Transverse colon (tissue), 4 donors: ENCODE measurements at regions of chr3 and their contacts with region 1.

Region 1: DNA sequence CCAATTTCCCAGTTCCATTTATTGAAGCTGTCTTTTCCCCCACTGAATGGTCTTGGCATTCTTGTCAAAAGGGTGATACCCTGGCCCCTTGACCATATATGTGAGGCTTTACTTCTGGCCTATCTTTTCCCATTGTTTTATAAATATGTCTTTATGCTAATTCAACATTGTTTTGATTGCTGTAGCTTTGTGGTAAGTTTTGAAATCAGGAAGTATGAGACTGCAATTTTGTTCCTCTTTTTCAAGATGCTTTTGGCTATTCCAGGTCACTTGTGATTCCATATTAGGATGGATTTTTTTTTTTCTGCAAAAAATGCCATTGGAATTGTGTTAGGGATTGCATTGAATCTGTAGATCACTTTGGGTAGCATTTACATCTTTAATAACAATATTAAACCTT is 141.2 kb upstream of the MANF start:
- DNase-seq: no peak
- H3K4me3 ChIP-seq: no peak overlapping the region
- H3K27ac ChIP-seq: no peak overlapping the region
- H3K4me1 ChIP-seq: no peaks in the 10 kb centered on the region
- H3K27me3 ChIP-seq: no peaks in the 10 kb centered on the region
- CTCF ChIP-seq: no peak
- EP300 ChIP-seq: no peak
- POLR2A ChIP-seq: no peak

Region 2: DNA sequence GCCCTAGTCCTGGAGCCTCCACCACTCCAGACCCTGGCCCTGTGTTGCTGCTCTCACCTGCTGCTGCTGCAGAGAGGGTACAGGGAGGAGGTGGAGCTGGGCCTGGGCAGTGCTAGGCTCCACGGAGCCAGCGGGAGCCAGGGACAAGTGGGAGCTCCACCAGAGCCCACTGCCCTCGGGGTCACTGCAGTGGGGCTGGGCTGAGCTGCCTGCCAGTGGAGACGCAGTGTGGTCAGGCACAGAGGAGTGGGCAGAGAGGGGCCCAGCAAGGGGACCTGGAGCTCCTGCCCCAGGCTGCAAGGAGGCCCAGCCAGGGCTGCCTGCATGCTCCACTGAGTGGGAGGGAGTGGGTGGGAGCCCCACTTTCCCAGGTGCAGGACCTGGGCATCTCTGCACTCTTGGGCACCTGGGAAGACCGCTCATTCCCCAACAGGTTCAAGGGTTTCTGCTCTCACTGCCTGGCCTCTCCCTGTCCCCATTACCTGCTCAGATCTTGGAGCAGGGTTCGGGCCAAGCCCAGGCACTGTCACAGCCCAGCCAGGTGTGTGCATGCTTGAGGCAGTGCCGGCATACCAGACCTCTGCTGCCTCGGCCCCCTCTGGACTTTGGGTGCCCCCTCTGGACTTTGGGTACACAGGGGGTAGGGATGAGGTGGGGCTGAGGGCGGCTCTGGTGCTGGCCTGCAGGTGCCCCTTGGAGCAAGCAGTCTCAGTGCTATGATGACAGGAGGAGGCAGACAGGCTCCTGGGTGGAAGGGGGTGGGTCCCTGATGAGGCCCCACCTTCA is 261.2 kb before region 1 on chr3:
- in situ Hi-C with region 1: no loop called
- intact Hi-C with region 1: no loop called
- DNase-seq: no peak
- H3K4me3 ChIP-seq: no peak overlapping the region
- H3K27ac ChIP-seq: no peak overlapping the region
- H3K4me1 ChIP-seq: no peaks in the 10 kb centered on the region
- H3K27me3 ChIP-seq: no peaks in the 10 kb centered on the region
- CTCF ChIP-seq: no peak
- EP300 ChIP-seq: no peak
- POLR2A ChIP-seq: no peak

Region 3: GRCh38 chr3:51198477-51198876 is 45.4 kb before region 1 on chr3:
- in situ Hi-C with region 1: no loop called
- intact Hi-C with region 1: loop called (anchors 1 kb)
- DNase-seq: no peak
- H3K4me3 ChIP-seq: no peak overlapping the region
- H3K27ac ChIP-seq: no peak overlapping the region
- H3K4me1 ChIP-seq: no peaks in the 10 kb centered on the region
- H3K27me3 ChIP-seq: no peaks in the 10 kb centered on the region
- CTCF ChIP-seq: no peak
- EP300 ChIP-seq: no peak
- POLR2A ChIP-seq: no peak

Region 4: GRCh38 chr3:51391075-51391567 is 147.2 kb after region 1 on chr3 and contains the start of gene RBM15B:
- in situ Hi-C with region 1: no loop called
- intact Hi-C with region 1: no loop called
- DNase-seq: peak; percentile 98
- H3K4me3 ChIP-seq: peak within 1 kb of the TSS; percentile 72 to 91 (median 87)
- H3K27ac ChIP-seq: peak within 1 kb of the TSS; percentile 93 to 94 (median 94)
- H3K4me1 ChIP-seq: peaks cover 26 to 77% (median 66%) of the 10 kb centered on the region in 4 donors
- H3K27me3 ChIP-seq: no peaks in the 10 kb centered on the region
- CTCF ChIP-seq: peak in 3 of 5 experiments; percentile 82 to 94 (median 93)
- EP300 ChIP-seq: no peak
- POLR2A ChIP-seq: peak; percentile 18
- total RNA-seq, gene RBM15B: 19.1 to 69.9 (median 28.0) TPM